Left ventricle myocardium inferior (tissue), 1 donor: ENCODE measurements at regions of chr6 and their contacts with region 1.

Region 1: GRCh38 chr6:87929843-87930288 is 117.8 kb upstream of the SPACA1 start:
- DNase-seq: peak; percentile 73
- H3K4me3 ChIP-seq: no peak overlapping the region
- H3K27ac ChIP-seq: no peak overlapping the region
- H3K4me1 ChIP-seq: peaks cover 3% of the 10 kb centered on the region
- H3K27me3 ChIP-seq: no peaks in the 10 kb centered on the region
- CTCF ChIP-seq: peak; percentile 86

Region 2: GRCh38 chr6:88492824-88493223 is 563.0 kb after region 1 on chr6:
- intact Hi-C with region 1: loop called (anchors 5 kb)
- DNase-seq: no peak
- H3K4me3 ChIP-seq: no peak overlapping the region
- H3K27ac ChIP-seq: no peak overlapping the region
- H3K4me1 ChIP-seq: no peaks in the 10 kb centered on the region
- H3K27me3 ChIP-seq: peaks cover 12% of the 10 kb centered on the region
- CTCF ChIP-seq: peak; percentile 60

Region 3: GRCh38 chr6:88870717-88871330 is 941.0 kb after region 1 on chr6:
- intact Hi-C with region 1: loop called (anchors 5 kb)
- DNase-seq: no peak
- H3K4me3 ChIP-seq: no peak overlapping the region
- H3K27ac ChIP-seq: no peak overlapping the region
- H3K4me1 ChIP-seq: peaks cover 7% of the 10 kb centered on the region
- H3K27me3 ChIP-seq: no peaks in the 10 kb centered on the region
- CTCF ChIP-seq: peak; percentile 75